Natural killer cell (primary cell): ENCODE measurements at regions of chr6 and their contacts with region 1.

Region 1: DNA sequence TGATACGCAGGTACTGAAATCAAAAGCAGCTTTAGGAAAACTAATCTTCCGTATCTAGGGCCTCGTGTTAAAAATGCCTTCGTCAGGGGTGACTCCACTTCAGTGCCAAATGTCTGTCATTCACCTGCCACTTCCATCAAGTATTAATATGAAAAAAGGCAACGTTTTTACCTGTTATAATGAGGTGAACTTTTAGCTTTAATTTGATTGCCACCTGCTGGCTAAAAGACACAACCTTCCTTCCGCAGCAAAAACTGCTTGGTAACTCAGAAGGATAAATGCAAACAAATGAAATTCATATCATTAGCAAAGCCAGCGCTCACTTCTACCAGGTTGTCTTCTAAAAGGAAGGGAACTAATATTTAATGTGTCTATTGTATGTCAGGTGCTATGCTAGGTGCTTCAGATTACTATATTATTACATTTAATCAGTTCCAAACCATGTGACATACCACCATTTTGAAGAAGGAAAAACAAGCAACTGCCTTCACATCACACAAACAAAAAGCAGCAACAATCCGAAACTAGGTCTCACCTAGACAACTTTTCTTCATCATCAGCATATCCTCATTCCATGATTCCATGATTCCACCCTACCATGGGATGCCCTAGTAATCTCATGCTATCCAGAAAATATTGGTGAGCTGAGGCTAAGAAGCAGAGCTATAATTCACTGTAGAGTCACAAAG is 20.6 kb upstream of the ARHGAP18 start:
- DNase-seq: peak in 1 of 2 donors; percentile 74
- ATAC-seq: peak in 2 of 3 donors; percentile 50 to 57
- H3K4me3 ChIP-seq: no peak overlapping the region
- H3K4me3 Mint-ChIP-seq: no peak overlapping the region
- H3K27ac ChIP-seq: no peak overlapping the region
- H3K27ac Mint-ChIP-seq: peak overlapping the region in 1 of 2 donors; percentile 33
- H3K4me1 ChIP-seq: no peaks in the 10 kb centered on the region
- H3K4me1 Mint-ChIP-seq: peaks cover 5 to 8% of the 10 kb centered on the region in 2 donors
- H3K27me3 ChIP-seq: no peaks in the 10 kb centered on the region
- H3K27me3 Mint-ChIP-seq: no peaks in the 10 kb centered on the region
- CTCF ChIP-seq: peak; percentile 69

Region 2: DNA sequence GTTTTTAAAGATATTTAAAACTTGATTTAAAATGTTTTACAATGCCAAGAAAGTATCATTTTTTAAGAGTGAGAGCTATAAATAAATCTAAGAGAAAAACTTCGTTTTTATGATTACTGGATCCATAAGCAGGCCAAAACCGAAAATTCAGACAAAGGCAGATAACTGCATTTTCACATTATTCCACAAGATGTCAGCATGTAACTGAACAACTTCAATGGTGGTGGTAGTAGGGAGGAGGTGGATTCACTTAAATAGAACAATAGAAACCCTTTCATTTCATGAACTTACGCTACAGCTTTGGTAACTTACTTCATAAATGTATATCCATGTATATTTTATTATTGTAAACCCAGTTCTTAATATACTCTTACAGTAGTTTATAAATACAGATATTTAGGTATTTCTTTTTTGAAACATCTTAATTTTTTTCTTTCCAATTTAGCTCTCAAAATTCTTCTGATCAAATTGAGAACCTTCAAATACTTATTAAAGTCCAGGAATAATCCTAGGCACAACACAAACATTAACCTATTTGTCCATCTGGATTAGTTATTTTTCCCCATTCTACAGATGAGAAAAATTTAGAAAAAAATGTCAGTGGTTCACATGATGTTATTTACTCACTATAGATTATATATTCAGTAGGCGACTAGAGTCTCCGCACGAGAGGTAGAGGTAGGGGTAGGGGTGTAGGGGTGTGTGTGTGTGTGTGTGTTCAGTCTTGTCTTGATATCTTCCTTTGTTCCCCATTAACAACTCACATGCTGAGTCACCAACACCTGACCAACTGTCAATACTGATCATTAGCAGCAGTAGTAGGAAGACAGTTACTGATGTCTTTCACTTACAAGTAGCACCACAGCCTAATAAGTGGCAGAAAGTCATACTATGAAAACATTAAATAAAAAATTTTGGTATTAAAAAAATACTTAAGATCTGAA is 132.1 kb before region 1 on chr6:
- intact Hi-C with region 1: loop called (anchors 1 kb)
- DNase-seq: peak in 1 of 2 donors; percentile 84
- ATAC-seq: peak; percentile 87 to 98 (median 94)
- H3K4me3 ChIP-seq: no peak overlapping the region
- H3K4me3 Mint-ChIP-seq: no peak overlapping the region
- H3K27ac ChIP-seq: no peak overlapping the region
- H3K27ac Mint-ChIP-seq: no peak overlapping the region
- H3K4me1 ChIP-seq: no peaks in the 10 kb centered on the region
- H3K4me1 Mint-ChIP-seq: no peaks in the 10 kb centered on the region
- H3K27me3 ChIP-seq: no peaks in the 10 kb centered on the region
- H3K27me3 Mint-ChIP-seq: no peaks in the 10 kb centered on the region
- CTCF ChIP-seq: peak; percentile 87

Region 3: DNA sequence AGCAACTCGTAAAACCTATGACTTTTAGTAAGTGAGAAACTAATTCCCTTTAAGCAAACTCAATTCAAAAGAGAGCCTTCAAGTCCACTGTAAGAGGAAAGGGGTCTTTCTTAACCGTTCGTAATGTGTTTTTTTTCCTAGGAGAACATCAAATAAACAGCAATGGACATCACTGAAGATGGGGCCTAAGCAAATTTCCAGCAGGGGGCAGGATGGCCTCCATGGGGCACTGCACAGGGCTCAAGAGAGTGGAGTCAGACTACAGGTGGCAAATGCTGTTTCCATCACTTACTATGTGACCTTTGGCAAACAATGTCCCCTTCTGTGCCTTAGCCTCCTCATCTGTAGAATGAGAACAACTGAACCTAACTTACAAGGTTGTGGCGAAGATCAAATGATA is 109.4 kb before region 1 on chr6:
- intact Hi-C with region 1: loop called (anchors 5 kb)
- DNase-seq: peak in 1 of 2 donors; percentile 62
- ATAC-seq: peak; percentile 48 to 70 (median 64)
- H3K4me3 ChIP-seq: no peak overlapping the region
- H3K4me3 Mint-ChIP-seq: no peak overlapping the region
- H3K27ac ChIP-seq: no peak overlapping the region
- H3K27ac Mint-ChIP-seq: no peak overlapping the region
- H3K4me1 ChIP-seq: no peaks in the 10 kb centered on the region
- H3K4me1 Mint-ChIP-seq: peaks cover 0 to 4% of the 10 kb centered on the region in 2 donors
- H3K27me3 ChIP-seq: no peaks in the 10 kb centered on the region
- H3K27me3 Mint-ChIP-seq: no peaks in the 10 kb centered on the region
- CTCF ChIP-seq: peak; percentile 33

Region 4: GRCh38 chr6:129632172-129632613 is 98.4 kb before region 1 on chr6:
- intact Hi-C with region 1: no loop called
- DNase-seq: no peak
- ATAC-seq: no peak
- H3K4me3 ChIP-seq: no peak overlapping the region
- H3K4me3 Mint-ChIP-seq: no peak overlapping the region
- H3K27ac ChIP-seq: no peak overlapping the region
- H3K27ac Mint-ChIP-seq: no peak overlapping the region
- H3K4me1 ChIP-seq: no peaks in the 10 kb centered on the region
- H3K4me1 Mint-ChIP-seq: no peaks in the 10 kb centered on the region
- H3K27me3 ChIP-seq: no peaks in the 10 kb centered on the region
- H3K27me3 Mint-ChIP-seq: no peaks in the 10 kb centered on the region
- CTCF ChIP-seq: no peak

Region 5: DNA sequence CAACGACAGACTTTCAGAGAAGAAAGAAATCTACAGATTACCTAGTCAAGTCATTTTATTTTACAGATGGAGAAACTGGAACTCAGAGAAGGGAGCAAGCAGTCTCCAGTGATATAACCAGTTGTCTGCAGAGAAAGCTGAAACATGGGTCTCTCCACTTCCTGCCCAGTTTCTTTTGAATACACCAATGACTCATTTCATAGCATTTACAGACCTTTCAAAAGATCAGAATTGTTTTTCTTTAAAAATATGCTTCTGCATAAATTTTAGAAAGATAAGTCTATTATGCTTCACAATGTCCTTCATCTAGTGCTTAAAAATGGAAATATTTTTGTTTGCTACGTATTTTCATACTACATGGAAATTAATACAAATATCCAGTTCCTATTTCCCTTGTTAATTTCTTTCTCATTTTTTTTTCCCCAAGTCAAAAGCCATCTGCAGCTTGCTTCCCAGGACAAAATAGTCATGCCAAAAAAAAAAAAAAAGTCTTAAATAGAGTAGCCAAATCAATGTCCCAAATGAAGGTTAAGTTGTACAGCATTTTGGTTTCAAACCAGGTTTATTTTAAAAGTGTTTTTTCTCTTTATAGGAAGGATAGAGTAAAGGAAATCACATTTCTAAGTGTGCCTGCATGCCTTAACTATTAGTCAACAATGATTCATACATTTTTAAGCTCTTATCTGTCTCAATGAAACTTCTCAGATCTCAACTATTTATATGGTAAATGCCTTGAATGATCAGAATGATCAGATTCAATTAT is 57.6 kb before region 1 on chr6:
- intact Hi-C with region 1: loop called (anchors 1 kb)
- DNase-seq: peak in 1 of 2 donors; percentile 57
- ATAC-seq: peak; percentile 42 to 61 (median 44)
- H3K4me3 ChIP-seq: no peak overlapping the region
- H3K4me3 Mint-ChIP-seq: peak overlapping the region; percentile 69
- H3K27ac ChIP-seq: peak overlapping the region; percentile 62
- H3K27ac Mint-ChIP-seq: peak overlapping the region; percentile 83 to 88
- H3K4me1 ChIP-seq: peaks cover 6% of the 10 kb centered on the region
- H3K4me1 Mint-ChIP-seq: peaks cover 27 to 30% of the 10 kb centered on the region in 2 donors
- H3K27me3 ChIP-seq: no peaks in the 10 kb centered on the region
- H3K27me3 Mint-ChIP-seq: no peaks in the 10 kb centered on the region
- CTCF ChIP-seq: no peak